ENCODE measurements at regions of chr11 and their contacts with region 1.

Region 1: DNA sequence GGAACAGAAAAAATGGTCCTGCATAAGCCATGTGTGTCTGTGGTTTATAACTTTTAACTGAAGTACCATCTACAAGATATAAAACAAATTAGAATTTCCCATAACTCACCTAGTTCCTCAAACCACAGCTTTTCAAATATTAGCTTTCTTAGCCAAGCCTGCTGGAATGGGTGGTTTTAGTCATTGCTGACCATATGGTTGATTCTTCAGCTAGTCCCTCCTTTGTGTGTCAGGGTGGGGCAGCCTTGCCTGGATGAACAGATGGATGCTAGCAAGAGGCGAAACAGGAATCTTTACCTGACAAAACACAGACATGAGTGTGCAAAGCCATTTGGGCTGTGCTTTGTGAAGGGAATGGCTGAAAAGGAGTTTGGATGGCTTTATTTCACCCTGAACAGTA is 6.9 kb upstream of the B3GNT6 start:
- DNase-seq: peak; percentile 43
- H3K4me3 Mint-ChIP-seq: no peak overlapping the region
- H3K27ac Mint-ChIP-seq: peak overlapping the region; percentile 52
- H3K4me1 Mint-ChIP-seq: peaks cover 61% of the 10 kb centered on the region
- H3K27me3 Mint-ChIP-seq: no peaks in the 10 kb centered on the region
- CTCF ChIP-seq: no peak

Region 2: DNA sequence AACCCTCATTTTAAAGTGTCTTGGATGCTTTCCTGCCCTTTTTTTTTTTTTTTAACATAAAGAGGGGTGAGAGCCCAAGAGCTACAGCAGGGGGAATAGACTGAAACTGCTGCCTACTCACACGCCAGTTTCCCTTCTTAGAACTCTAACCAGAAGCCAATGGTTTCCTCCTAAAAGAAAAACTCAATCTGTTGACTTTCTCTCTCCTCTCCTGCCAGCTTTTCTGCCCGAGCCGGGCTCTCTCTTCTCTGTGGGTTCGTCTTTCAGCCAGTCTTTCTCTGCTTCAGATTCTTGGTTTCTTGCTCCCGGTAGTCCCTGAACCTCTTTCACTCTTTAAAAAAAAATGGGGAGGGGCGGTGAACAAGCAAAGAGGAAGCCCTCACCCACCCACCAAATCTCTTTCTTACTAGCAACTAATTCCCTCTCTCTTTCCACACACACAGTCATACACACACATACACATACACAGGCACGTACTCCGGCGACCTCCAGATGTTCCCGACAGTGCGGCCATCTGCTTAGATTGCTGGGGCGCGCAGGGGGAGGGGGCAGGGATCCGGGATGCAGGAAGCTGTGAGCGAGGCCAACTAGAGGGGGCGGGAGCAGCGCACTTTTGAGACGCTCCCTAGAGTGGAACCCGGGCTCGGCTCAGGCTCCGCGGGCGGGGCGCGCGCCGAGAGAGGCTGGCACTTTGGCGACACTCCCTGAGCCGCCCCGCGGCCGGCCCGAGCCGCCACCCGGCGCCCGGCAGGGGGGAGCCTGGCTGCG is 244.6 kb before region 1 on chr11:
- CTCF ChIA-PET with region 1: no interaction called
- intact Hi-C with region 1: no loop called
- DNase-seq: peak; percentile 91
- H3K4me3 Mint-ChIP-seq: peak overlapping the region; percentile 84
- H3K27ac Mint-ChIP-seq: peak overlapping the region; percentile 78
- H3K4me1 Mint-ChIP-seq: peaks cover 54% of the 10 kb centered on the region
- H3K27me3 Mint-ChIP-seq: no peaks in the 10 kb centered on the region
- CTCF ChIP-seq: no peak

Region 3: GRCh38 chr11:76807206-76807875 is 219.9 kb before region 1 on chr11:
- CTCF ChIA-PET with region 1: no interaction called
- intact Hi-C with region 1: loop called (anchors 5 kb)
- DNase-seq: peak; percentile 90
- H3K4me3 Mint-ChIP-seq: no peak overlapping the region
- H3K27ac Mint-ChIP-seq: peak overlapping the region; percentile 17
- H3K4me1 Mint-ChIP-seq: peaks cover 19% of the 10 kb centered on the region
- H3K27me3 Mint-ChIP-seq: no peaks in the 10 kb centered on the region
- CTCF ChIP-seq: peak; percentile 87

Region 4: GRCh38 chr11:76962583-76963416 is 64.5 kb before region 1 on chr11:
- CTCF ChIA-PET with region 1: no interaction called
- intact Hi-C with region 1: loop called (anchors 2 kb)
- DNase-seq: peak; percentile 58
- H3K4me3 Mint-ChIP-seq: peak overlapping the region; percentile 49
- H3K27ac Mint-ChIP-seq: peak overlapping the region; percentile 89
- H3K4me1 Mint-ChIP-seq: peaks cover 31% of the 10 kb centered on the region
- H3K27me3 Mint-ChIP-seq: no peaks in the 10 kb centered on the region
- CTCF ChIP-seq: no peak

Region 5: DNA sequence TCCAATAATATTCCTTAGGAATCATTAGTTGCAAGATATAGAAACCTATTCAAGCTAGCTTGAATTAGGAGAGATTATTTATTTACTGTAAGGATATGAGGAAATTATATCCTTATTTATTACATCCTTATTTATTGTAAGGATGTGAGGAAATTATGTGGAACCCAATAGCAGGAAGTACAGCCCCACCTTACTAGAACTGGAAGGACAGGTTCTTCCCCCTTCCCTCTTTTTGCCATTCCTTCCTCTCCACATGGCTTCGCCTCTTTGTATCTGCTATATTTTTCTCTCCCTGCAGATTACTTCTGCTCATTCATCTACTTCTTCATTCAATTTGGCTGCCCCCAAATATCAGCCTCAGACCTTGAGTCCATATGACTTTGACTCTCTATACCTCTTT is 42.5 kb before region 1 on chr11:
- CTCF ChIA-PET with region 1: no interaction called
- intact Hi-C with region 1: loop called (anchors 5 kb)
- DNase-seq: peak; percentile 31
- H3K4me3 Mint-ChIP-seq: peak overlapping the region; percentile 4
- H3K27ac Mint-ChIP-seq: peak overlapping the region; percentile 53
- H3K4me1 Mint-ChIP-seq: peaks cover 20% of the 10 kb centered on the region
- H3K27me3 Mint-ChIP-seq: no peaks in the 10 kb centered on the region
- CTCF ChIP-seq: no peak

Region 6: GRCh38 chr11:77147668-77148321 is 120.5 kb after region 1 on chr11:
- CTCF ChIA-PET with region 1: no interaction called
- intact Hi-C with region 1: no loop called
- DNase-seq: no peak
- H3K4me3 Mint-ChIP-seq: peak overlapping the region; percentile 54
- H3K27ac Mint-ChIP-seq: no peak overlapping the region
- H3K4me1 Mint-ChIP-seq: peaks cover 6% of the 10 kb centered on the region
- H3K27me3 Mint-ChIP-seq: peaks cover 56% of the 10 kb centered on the region
- CTCF ChIP-seq: no peak

Measured in Calu3 (cell line).